Cardiac septum (tissue), 1 donor: ENCODE measurements at regions of chr1 and their contacts with region 1.

Region 1: DNA sequence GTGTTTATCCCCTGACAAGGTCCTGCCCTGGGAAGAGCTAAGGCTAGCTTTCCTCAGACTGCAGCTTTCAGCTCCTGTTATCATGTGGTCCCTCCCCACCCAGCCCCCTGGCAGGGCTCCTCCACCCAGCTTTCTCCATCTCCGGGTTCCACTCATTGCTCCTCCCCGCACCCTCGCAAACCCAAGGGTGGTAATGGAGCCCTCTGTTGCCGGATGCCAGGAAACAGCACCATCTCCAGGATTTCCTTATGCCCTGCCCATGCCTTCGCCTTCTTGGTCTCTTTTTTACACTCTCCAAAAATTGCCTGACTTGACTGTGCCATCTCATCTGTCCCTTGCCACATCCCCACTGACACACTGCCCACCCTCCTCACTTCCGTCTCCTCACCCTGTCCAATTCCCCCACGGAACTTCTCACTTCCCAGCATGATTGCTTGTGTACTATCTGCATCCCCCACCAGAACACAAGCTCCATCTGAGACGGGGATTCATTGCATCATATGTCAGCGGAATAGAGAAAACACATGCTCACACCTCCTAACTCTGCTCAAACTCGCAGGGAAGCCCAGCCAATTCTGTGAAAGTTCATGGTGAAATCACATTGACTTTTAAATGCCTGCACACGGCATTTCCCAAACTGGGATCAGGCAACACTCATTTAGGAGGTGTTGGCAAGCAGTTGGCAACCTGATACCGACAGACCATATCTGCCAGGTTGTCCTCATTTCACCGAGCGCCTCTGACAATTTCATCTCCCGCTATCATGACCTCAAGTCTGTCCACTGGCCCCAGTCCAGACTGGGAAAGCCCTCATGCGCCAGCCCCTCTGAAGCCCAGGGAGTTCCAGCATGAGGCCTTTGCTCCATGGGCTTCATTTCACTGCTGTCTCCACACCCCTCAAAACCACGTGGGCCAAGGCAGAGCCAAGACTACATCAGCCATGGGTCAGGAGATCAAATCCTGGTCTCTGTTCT is 201.1 kb downstream of the MATN1 start:
- DNase-seq: peak; percentile 88

Region 2: DNA sequence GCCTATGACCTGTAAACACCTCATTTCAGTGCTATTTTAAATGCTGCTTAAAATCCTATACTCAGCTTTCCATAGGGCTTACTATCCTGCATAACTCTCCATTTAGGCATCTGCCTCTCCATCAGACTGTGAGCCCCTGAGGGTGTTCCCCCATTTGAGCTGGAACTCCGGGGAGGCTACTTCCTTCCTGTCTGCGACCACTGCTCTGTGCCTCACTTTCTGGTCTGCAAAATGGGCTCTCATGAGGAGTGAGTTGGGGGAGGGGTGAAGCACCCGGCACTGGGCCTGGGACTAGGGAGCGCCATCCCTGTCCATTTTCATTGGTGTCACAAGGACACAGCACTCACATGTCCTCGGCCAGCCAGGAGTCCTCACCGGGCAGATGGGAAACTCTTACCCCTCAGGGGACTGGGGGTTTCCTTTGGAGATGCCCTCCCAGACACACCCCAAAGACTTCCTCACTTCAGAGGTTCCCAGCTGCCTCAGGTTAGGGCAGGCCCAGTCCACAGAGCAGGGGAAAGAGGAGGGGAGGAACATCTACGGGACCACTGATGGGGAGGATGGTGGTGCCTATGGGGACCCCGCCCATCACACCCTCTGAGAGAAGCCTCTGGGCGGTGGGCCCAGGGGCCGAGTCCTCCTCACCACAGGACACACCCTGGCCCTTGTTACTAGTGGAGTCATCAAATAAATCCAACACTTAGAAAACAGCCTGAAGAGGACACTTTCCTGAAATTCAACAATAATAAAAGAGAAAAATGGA is 66.2 kb after region 1 on chr1:
- intact Hi-C with region 1: no loop called
- DNase-seq: no peak

Region 3: GRCh38 chr1:30700528-30701257 is 178.4 kb after region 1 on chr1:
- intact Hi-C with region 1: loop called (anchors 5 kb)
- DNase-seq: no peak